ENCODE measurements at regions of chr5 and their contacts with region 1.

Region 1: DNA sequence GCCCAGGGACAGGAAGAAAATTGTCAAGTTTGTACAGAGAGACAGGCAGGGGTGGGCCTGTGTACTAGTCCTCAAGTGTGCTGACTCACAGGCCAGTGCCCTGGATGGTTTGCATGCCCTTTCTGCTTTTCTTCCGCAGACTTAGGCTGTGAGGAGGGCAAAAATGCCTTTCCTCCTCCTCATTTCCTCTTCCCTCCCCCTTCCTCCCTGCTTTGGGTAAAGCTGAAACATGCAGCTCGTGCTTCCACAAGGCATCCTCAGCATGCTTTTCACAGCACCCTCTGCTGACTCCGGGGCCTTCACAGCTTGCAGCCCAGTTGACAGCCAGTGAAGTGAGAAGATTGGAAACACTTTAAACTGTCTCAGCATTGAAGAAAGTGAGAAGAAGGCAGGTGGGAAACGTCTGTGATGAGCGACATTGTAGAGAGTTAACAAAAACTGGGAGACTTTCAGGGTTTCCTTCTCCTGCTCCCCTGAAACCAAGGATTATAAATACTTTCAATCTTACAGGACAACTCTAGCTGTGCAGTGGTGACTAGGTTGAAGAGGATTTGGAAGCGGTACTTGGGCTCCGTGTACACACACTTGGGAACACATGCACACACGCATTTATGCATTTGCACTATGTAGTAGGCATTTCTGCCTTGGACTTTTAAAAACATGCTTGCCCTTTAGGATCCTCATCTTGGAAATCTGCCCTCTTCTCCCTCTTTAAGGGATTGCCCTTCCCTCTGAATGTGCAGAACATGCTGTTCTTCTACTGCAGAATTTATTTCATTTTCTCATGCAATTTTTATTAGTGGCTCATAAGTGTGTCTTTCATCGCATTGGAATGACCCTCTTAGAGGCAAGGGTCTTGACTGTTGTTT is 138.8 kb downstream of the GRIA1 start:
- DNase-seq: peak; percentile 58 to 93
- H3K4me3 ChIP-seq: no peak overlapping the region
- H3K27ac ChIP-seq: peak overlapping the region; percentile 72 to 84
- H3K4me1 ChIP-seq: peaks cover 4 to 22% of the 10 kb centered on the region in 2 donors
- H3K27me3 ChIP-seq: no peaks in the 10 kb centered on the region
- CTCF ChIP-seq: peak in 2 of 3 experiments; percentile 33 to 45

Region 2: GRCh38 chr5:152634586-152634985 is 994.7 kb before region 1 on chr5:
- intact Hi-C with region 1: loop called (anchors 10 kb)
- DNase-seq: peak in 1 of 2 donors; percentile 66
- H3K4me3 ChIP-seq: no peak overlapping the region
- H3K27ac ChIP-seq: peak overlapping the region; percentile 85 to 90
- H3K4me1 ChIP-seq: peaks cover 0 to 61% of the 10 kb centered on the region in 2 donors
- H3K27me3 ChIP-seq: no peaks in the 10 kb centered on the region
- CTCF ChIP-seq: no peak

Region 3: DNA sequence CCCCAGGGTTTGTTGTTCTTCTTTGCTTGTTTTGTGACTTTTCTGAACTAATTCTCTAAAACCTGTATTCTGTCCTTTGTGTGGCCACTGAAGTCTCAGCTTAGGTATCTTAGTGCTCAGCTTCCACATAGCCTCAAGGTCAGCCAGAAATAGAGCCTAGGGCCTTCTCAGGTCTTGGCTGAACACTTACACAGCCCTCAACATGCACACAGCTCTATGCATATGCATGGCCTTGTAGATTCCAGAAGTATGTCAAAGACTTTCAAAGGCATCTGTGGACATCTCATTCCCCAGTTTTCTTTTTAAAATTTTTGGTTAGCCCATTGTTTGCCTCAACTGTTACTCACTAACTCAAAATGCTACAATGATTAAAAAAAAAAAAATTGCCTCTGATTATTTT is 238.7 kb before region 1 on chr5:
- intact Hi-C with region 1: loop called (anchors 5 kb)
- DNase-seq: no peak
- H3K4me3 ChIP-seq: no peak overlapping the region
- H3K27ac ChIP-seq: peak overlapping the region in 1 of 2 donors; percentile 43
- H3K4me1 ChIP-seq: no peaks in the 10 kb centered on the region
- H3K27me3 ChIP-seq: no peaks in the 10 kb centered on the region
- CTCF ChIP-seq: no peak

Region 4: DNA sequence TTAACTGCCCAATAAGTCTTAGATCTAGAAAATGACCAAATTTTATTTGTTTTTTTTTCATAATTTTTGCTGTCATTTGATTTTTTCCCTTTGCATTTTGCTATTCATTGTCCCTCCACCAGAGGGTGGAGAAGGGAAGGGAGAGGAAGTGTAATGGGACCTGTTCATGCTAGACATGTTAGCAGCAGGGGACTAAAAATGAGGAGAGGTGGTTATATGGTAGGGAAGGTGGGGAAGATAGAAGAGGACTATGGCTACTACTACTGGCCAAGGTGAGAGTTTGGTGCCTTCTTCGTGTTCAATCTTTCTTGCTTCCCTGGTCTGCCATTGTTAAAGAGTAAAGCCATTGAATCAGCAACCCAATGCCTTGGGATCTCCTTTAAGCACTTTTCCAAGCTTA is 132.4 kb before region 1 on chr5:
- intact Hi-C with region 1: loop called (anchors 5 kb)
- DNase-seq: no peak
- H3K4me3 ChIP-seq: no peak overlapping the region
- H3K27ac ChIP-seq: no peak overlapping the region
- H3K4me1 ChIP-seq: peaks cover 0 to 15% of the 10 kb centered on the region in 2 donors
- H3K27me3 ChIP-seq: no peaks in the 10 kb centered on the region
- CTCF ChIP-seq: peak; percentile 49 to 75 (median 52)

Region 5: DNA sequence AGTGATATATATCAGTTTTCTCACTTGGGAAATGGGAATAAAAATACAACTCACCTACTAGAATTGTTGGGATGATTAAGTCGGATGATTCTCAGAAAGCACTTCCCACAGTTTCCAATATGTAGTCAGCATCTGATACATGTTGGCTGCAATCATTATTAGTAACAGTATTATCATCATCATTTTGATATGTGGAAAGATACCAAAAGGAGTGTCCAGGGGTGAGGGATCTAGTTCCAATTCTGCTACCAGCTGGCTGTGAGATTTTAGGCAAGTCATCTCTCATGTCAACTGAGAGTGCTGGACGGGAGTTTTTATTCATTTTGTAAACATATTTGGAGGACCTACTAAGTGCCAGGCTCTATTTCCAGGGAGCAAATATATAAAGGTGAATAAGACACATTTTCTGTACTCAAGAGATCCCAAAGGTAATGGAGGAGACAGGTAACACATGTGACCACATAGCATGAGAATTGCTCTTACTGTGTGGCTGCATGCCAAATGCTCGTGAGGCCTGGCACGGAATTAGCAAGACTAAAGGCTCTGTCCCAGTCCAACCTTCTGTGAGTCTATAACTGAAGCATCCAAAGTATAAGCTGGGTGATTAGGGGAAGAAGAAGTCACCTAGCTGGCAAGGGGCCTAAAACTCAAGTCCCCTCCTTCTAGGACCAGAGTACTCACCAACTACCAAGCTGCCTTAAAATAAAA is 55.8 kb before region 1 on chr5:
- intact Hi-C with region 1: loop called (anchors 2 kb)
- DNase-seq: no peak
- H3K4me3 ChIP-seq: no peak overlapping the region
- H3K27ac ChIP-seq: peak overlapping the region; percentile 68 to 81
- H3K4me1 ChIP-seq: peaks cover 0 to 36% of the 10 kb centered on the region in 2 donors
- H3K27me3 ChIP-seq: no peaks in the 10 kb centered on the region
- CTCF ChIP-seq: no peak

Region 6: GRCh38 chr5:153896701-153897100 is 267.4 kb after region 1 on chr5:
- intact Hi-C with region 1: loop called (anchors 5 kb)
- DNase-seq: no peak
- H3K4me3 ChIP-seq: no peak overlapping the region
- H3K27ac ChIP-seq: peak overlapping the region in 1 of 2 donors; percentile 1
- H3K4me1 ChIP-seq: peaks cover 0 to 32% of the 10 kb centered on the region in 2 donors
- H3K27me3 ChIP-seq: no peaks in the 10 kb centered on the region
- CTCF ChIP-seq: no peak

Region 7: DNA sequence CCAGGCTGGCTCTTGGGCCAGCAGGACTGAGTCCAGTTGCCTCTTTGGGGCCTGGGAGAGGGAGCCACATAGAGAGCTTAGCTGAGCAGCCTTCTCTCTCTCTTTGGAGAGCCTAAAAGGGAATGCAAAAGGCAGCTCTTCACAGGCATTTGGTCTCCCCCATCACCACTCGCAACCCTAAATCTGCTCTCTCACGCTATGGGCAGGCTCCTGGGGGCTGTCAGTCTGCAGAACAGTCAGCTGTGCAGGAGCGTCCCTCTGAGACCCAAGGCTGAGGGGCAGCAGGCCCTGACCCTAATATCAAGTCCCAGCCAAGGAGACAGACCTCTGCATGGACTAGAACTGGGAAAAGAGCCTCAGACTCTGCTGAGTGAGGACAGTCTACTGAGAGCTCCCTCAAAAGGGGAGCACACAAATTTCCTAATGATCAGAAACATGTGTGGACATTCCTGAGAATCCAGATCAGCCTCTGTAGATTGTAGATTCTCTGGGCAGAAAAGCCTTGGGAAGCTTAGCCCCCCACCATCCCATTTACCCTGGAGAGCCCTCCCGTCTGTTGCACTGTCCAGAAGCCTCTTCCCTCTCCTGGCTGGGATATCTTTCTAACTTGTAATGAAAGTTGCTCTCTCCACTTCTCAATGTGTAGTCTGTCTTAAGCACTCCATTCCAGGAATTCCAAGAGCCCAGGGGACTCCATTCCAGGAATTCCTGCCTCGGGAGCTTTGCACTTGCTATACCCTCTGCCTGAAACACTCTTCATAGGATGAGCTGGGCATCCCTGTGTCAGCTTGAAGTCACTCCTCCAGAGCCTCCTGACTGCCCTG is 330.1 kb after region 1 on chr5:
- intact Hi-C with region 1: loop called (anchors 2 kb)
- DNase-seq: no peak
- H3K4me3 ChIP-seq: no peak overlapping the region
- H3K27ac ChIP-seq: peak overlapping the region in 1 of 2 donors; percentile 47
- H3K4me1 ChIP-seq: peaks cover 11 to 23% of the 10 kb centered on the region in 2 donors
- H3K27me3 ChIP-seq: no peaks in the 10 kb centered on the region
- CTCF ChIP-seq: no peak